Endothelial cell of umbilical vein (primary cell): ENCODE measurements at regions of chr10 and their contacts with region 1.

Region 1: GRCh38 chr10:44801383-44802327 is 109.5 kb upstream of the TMEM72 start:
- DNase-seq: peak; percentile 92
- H3K4me3 ChIP-seq: no peak overlapping the region
- H3K27ac ChIP-seq: peak overlapping the region; percentile 19
- H3K4me1 ChIP-seq: peaks cover 22% of the 10 kb centered on the region
- H3K27me3 ChIP-seq: peaks cover 0 to 2% of the 10 kb centered on the region in 2 experiments
- CTCF ChIP-seq: no peak
- POLR2A ChIP-seq: no peak

Region 2: GRCh38 chr10:43931308-43931930 is 870.2 kb before region 1 on chr10:
- CTCF ChIA-PET with region 1: no interaction called
- POLR2A ChIA-PET with region 1: no interaction called
- dilution Hi-C with region 1: no loop called
- intact Hi-C with region 1: no loop called
- DNase-seq: no peak
- H3K4me3 ChIP-seq: no peak overlapping the region
- H3K27ac ChIP-seq: no peak overlapping the region
- H3K4me1 ChIP-seq: no peaks in the 10 kb centered on the region
- H3K27me3 ChIP-seq: peaks cover 0 to 2% of the 10 kb centered on the region in 2 experiments
- CTCF ChIP-seq: no peak
- POLR2A ChIP-seq: no peak

Region 3: GRCh38 chr10:44752451-44753441 is 48.9 kb before region 1 on chr10:
- CTCF ChIA-PET with region 1: no interaction called
- POLR2A ChIA-PET with region 1: no interaction called
- dilution Hi-C with region 1: no loop called
- intact Hi-C with region 1: loop called (anchors 1 kb)
- DNase-seq: peak; percentile 80
- H3K4me3 ChIP-seq: no peak overlapping the region
- H3K27ac ChIP-seq: no peak overlapping the region
- H3K4me1 ChIP-seq: peaks cover 20% of the 10 kb centered on the region
- H3K27me3 ChIP-seq: no peaks in the 10 kb centered on the region
- CTCF ChIP-seq: no peak
- POLR2A ChIP-seq: no peak

Region 4: GRCh38 chr10:45420453-45421192 is 619.0 kb after region 1 on chr10:
- CTCF ChIA-PET with region 1: no interaction called
- POLR2A ChIA-PET with region 1: no interaction called
- dilution Hi-C with region 1: no loop called
- intact Hi-C with region 1: loop called (anchors 5 kb)
- DNase-seq: peak; percentile 78
- H3K4me3 ChIP-seq: no peak overlapping the region
- H3K27ac ChIP-seq: no peak overlapping the region
- H3K4me1 ChIP-seq: peaks cover 15% of the 10 kb centered on the region
- H3K27me3 ChIP-seq: no peaks in the 10 kb centered on the region
- CTCF ChIP-seq: no peak
- POLR2A ChIP-seq: no peak